ENCODE measurements at regions of chr16 and their contacts with region 1.

Region 1: GRCh38 chr16:89700100-89700648 is 1.3 kb downstream of the SPATA2L start:
- DNase-seq: peak; percentile 100
- ATAC-seq: peak; percentile 59
- H3K4me3 Mint-ChIP-seq: peak overlapping the region; percentile 64
- H3K27ac Mint-ChIP-seq: no peak overlapping the region; the same call in 1 of the 2 replicates
- H3K4me1 Mint-ChIP-seq: peaks cover 12% of the 10 kb centered on the region
- H3K27me3 Mint-ChIP-seq: peaks cover 25% of the 10 kb centered on the region
- CTCF ChIP-seq: no peak

Region 2: DNA sequence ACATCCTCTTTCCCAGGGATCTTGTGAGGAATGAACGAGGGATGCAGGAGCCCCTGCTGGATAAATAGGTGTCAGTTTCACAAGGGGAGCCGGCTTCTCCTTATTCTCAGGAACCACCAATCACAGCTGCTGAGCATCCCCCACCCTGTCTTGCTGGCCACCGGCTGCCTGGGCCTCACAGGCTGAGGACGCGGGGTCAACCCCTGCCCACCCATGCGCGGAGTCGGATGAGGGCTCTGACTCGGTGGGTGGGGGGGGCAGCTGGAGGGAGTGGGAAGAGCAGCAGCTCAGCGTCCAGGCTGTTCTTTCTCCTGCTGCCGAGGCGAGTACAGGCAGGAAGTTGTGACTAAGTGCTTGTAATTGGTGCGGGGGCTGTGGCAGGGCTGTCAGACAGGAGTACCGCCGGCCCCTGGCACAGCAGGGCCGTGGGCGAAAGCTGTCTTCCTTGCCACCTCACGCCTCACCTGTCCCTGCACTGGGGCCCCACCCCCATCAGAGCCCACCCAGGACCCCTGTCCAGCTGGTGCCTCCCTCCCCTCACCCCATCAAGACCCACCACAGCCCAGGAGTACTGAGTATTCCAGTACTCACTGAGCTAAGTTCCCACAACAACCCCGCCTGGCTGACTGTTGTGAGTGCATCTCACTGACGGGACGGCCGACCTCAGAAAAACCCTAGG is 97.8 kb before region 1 on chr16:
- CTCF ChIA-PET with region 1: interaction called, 10 read pairs
- POLR2A ChIA-PET with region 1: no interaction called
- DNase-seq: peak; percentile 51
- ATAC-seq: peak; percentile 46
- H3K4me3 Mint-ChIP-seq: no peak overlapping the region
- H3K27ac Mint-ChIP-seq: no peak overlapping the region
- H3K4me1 Mint-ChIP-seq: peaks cover 13% of the 10 kb centered on the region
- H3K27me3 Mint-ChIP-seq: no peaks in the 10 kb centered on the region
- CTCF ChIP-seq: no peak

Region 3: DNA sequence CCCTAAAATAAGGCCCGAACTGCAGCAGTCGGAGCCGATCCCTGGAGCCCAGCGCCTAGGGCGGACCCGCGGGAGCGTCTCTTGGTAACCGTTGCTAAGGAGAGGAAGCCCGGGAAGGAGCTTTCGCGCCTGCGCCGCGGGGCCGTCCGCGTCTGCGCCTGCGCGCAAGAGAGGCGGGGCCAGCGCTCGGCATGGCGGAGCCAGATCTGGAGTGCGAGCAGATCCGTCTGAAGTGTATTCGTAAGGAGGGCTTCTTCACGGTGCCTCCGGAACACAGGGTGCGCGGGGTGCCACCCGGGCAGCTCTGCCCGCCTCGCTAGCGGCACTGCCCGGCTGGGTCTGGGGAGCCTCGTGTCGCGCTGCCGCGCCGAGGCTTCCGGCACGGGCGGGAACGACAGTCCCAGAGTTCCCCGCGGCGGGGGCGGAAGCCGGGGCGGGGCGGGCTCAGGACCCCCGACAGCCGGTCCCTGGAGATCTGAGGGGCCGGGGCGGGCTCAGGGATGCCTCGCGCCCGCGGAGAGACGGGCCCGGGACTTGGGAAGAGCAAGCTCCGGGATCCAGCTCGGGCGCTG is 13.6 kb before region 1 on chr16 and contains the start of gene CDK10:
- CTCF ChIA-PET with region 1: interaction called, 19 read pairs
- POLR2A ChIA-PET with region 1: interaction called, 11 read pairs
- DNase-seq: peak; percentile 94
- ATAC-seq: peak; percentile 86
- H3K4me3 Mint-ChIP-seq: peak within 1 kb of the TSS; percentile 85
- H3K27ac Mint-ChIP-seq: peak within 1 kb of the TSS; percentile 87; the same call in 1 of the 2 replicates
- H3K4me1 Mint-ChIP-seq: peaks cover 7% of the 10 kb centered on the region
- H3K27me3 Mint-ChIP-seq: peaks cover 5% of the 10 kb centered on the region
- CTCF ChIP-seq: no peak
- total RNA-seq, gene CDK10: 79.8 to 102 TPM (median 81.6 TPM) in 3 replicates

Region 4: GRCh38 chr16:89711601-89712273 is 11.6 kb after region 1 on chr16:
- CTCF ChIA-PET with region 1: interaction called, 36 read pairs
- POLR2A ChIA-PET with region 1: interaction called, 18 read pairs
- DNase-seq: peak; percentile 79
- ATAC-seq: peak; percentile 66
- H3K4me3 Mint-ChIP-seq: peak overlapping the region; percentile 73
- H3K27ac Mint-ChIP-seq: no peak overlapping the region
- H3K4me1 Mint-ChIP-seq: peaks cover 7% of the 10 kb centered on the region
- H3K27me3 Mint-ChIP-seq: peaks cover 27% of the 10 kb centered on the region
- CTCF ChIP-seq: no peak

Region 5: GRCh38 chr16:89720813-89721545 is 20.8 kb after region 1 on chr16 and contains the starts of genes VPS9D1 and ZNF276:
- CTCF ChIA-PET with region 1: interaction called, 17 read pairs
- POLR2A ChIA-PET with region 1: no interaction called
- DNase-seq: peak; percentile 82
- ATAC-seq: peak; percentile 55
- H3K4me3 Mint-ChIP-seq: peak within 1 kb of the TSS; percentile 79
- H3K27ac Mint-ChIP-seq: 0 out of 2 replicates have a peak within 1 kb of the TSS, but pooled peaks have one; percentile 53
- H3K4me1 Mint-ChIP-seq: peaks cover 17% of the 10 kb centered on the region
- H3K27me3 Mint-ChIP-seq: peaks cover 55% of the 10 kb centered on the region
- CTCF ChIP-seq: no peak
- total RNA-seq, gene VPS9D1: 3.8 to 5.6 TPM (median 4.2 TPM) in 3 replicates
- total RNA-seq, gene ZNF276: 13.9 to 17.2 TPM (median 16.6 TPM) in 3 replicates

Region 6: GRCh38 chr16:89845417-89845816 is 145.2 kb after region 1 on chr16:
- CTCF ChIA-PET with region 1: no interaction called
- POLR2A ChIA-PET with region 1: no interaction called
- DNase-seq: no peak
- ATAC-seq: no peak
- H3K4me3 Mint-ChIP-seq: no peak overlapping the region
- H3K27ac Mint-ChIP-seq: no peak overlapping the region
- H3K4me1 Mint-ChIP-seq: peaks cover 3% of the 10 kb centered on the region; the same call in 1 of the 2 replicates
- H3K27me3 Mint-ChIP-seq: no peaks in the 10 kb centered on the region
- CTCF ChIP-seq: no peak

Measured in WTC11 (cell line).